ENCODE measurements at regions of chr3 and their contacts with region 1.

Region 1: DNA sequence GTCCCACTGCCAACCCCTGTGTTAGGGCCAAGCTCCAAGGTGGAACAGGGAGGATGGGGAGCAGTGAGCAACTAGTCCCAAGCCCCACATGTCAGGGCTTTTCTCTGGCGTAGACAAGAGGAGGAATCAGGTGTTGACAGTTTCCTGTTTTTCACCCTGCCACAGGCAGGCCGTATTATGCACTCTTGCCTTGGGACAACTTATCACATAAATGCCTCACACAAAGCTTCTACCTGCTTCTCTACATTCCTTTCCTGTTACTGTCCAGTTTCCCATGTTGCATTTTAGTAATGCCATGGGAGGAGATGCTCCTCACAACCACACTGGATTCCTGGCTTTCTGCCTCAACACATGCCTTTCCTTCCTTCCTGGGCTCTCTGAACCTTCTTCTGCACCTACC is 381.2 kb upstream of the ATP11B start:
- DNase-seq: no peak
- H3K4me3 ChIP-seq: no peak overlapping the region
- H3K27ac ChIP-seq: no peak overlapping the region
- H3K4me1 ChIP-seq: no peaks in the 10 kb centered on the region
- H3K27me3 ChIP-seq: no peaks in the 10 kb centered on the region
- CTCF ChIP-seq: no peak
- POLR2A ChIP-seq: no peak

Region 2: GRCh38 chr3:183653209-183654064 is 1241.4 kb after region 1 on chr3:
- intact Hi-C with region 1: loop called (anchors 10 kb)
- DNase-seq: no peak
- H3K4me3 ChIP-seq: no peak overlapping the region
- H3K27ac ChIP-seq: no peak overlapping the region
- H3K4me1 ChIP-seq: no peaks in the 10 kb centered on the region
- H3K27me3 ChIP-seq: no peaks in the 10 kb centered on the region
- CTCF ChIP-seq: no peak
- POLR2A ChIP-seq: no peak